ENCODE measurements at regions of chr6 and their contacts with region 1.

Region 1: GRCh38 chr6:43263314-43264178 is 20.3 kb downstream of the TTBK1 start:
- DNase-seq: peak; percentile 91

Region 2: DNA sequence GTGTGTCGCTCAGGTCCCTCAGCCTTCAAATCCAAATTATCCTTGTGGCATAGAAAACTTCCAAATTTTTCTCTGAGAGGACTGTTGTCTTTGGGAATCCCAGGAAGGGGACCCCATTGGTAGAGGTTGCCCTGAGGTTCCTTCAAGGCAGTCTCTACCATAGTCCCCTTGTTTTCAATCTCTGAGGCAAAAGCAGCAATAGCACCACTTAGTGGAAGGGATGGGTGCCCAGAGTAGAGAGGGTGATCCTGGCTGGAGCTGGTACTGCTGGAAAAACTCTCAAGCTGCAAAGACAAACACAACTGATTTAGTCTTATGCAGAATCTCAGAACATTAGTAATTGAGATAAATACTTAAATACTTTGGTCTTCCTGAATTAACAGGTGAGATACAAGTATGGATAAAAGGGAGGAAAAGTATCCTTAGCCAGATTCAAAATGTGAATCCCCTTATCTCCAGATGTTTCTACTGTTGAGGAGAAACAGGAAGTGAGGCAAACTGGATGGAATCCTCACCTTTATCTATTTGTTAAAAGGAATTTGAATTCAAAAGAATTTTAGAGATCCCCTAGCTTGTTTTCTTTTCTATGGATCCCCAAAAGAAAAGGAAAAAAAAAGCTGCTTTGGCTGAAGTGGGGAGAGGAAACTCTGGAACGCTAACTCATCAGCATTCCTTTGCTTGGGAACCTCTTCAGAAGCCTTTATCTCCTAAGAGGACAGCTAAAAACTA is 92.5 kb after region 1 on chr6:
- intact Hi-C with region 1: loop called (anchors 5 kb)
- DNase-seq: no peak

Region 3: GRCh38 chr6:43468748-43469681 is 205.5 kb after region 1 on chr6:
- intact Hi-C with region 1: no loop called
- DNase-seq: no peak

Measured in cardiac septum (tissue), 1 donor.